AG04449 (cell line): ENCODE measurements at regions of chr4 and their contacts with region 1.

Region 1: DNA sequence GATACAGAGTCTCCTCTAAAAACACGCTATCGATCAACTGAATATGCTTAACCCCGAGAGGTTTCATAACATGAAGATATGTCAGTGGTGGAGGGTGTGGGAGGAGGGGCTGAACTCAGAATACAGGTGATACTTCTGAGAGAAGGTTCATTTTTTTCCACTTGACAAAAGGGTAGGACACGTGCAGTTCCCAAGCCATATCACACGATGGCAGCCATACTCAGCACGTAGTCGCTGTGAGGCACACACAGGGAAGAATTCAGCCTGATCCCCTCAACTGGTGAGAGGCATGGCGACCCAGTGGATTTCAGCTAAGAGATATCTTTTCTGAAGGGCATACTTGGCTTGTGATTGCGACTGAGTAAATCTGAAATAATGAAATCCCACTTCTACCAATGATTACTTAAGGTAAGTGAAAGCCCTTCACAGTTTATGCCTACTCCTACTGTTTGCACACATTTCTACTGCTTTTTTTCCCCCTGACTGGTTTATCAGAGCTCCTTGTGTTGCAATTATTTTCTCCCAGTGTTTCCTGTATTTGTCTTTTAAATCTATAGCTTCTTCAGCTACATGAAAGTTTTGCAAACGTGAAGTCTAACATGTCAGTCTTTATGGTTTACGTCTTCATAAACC is 133.1 kb downstream of the CORIN start:
- DNase-seq: no peak
- H3K4me3 ChIP-seq: no peak overlapping the region
- CTCF ChIP-seq: peak; percentile 73

Region 2: GRCh38 chr4:47668810-47669408 is 35.9 kb before region 1 on chr4:
- CTCF ChIA-PET with region 1: interaction called, 12 read pairs
- POLR2A ChIA-PET with region 1: no interaction called
- DNase-seq: no peak
- H3K4me3 ChIP-seq: no peak overlapping the region
- CTCF ChIP-seq: peak; percentile 60

Region 3: DNA sequence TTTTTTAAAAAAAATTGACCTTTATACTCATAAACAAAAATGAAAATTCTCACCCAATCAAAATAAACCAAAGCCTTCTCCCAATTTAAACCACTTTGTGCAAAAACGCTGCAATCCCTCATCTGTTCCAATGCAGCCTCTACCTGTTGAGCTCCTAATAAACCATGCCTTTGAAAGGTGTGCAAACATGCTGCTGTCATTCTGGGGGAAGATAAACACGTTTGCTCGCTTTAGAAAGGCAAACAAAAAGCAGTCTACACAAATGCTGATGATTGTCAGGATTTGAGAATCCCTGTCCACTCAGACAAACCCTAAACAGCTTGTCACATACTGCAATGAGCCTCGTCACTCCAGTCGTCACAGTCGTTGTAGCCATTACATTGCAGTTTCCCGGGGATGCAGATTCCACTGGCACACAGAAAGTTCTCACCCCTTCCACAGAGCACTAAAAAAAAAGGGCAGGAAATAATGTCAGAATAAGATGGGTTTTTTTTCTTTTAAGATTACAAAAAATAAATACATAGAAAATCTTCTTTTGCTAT is 12.1 kb before region 1 on chr4:
- CTCF ChIA-PET with region 1: interaction called, 18 read pairs
- POLR2A ChIA-PET with region 1: no interaction called
- DNase-seq: no peak
- H3K4me3 ChIP-seq: no peak overlapping the region
- CTCF ChIP-seq: no peak

Region 4: DNA sequence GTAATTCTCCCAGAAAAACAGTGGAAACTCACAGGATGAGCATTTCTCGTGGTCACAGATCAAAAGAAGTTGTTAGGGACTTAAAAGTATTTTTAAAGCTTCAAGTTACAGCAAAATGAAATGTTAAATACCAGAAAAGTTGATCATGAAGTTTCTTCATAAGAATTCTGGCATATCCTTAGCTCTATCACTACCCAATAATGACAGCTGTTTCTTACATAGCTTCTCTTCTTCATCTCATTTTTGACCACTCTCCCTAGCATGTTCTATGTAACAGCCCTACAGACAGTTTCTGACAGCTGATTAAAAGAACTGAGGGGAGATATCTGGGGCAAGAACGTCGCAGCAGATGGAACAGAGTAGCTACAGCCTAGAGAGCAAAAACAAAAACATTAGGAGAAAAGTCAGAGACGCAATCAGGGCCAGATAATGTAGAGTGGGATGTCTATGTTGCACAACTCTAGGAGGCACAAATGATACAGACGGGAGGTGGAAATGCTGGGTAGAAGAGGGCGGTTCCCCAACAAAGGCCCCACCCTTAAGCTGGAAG is 24.4 kb after region 1 on chr4:
- CTCF ChIA-PET with region 1: interaction called, 13 read pairs
- POLR2A ChIA-PET with region 1: no interaction called
- DNase-seq: no peak
- H3K4me3 ChIP-seq: no peak overlapping the region
- CTCF ChIP-seq: no peak

Region 5: DNA sequence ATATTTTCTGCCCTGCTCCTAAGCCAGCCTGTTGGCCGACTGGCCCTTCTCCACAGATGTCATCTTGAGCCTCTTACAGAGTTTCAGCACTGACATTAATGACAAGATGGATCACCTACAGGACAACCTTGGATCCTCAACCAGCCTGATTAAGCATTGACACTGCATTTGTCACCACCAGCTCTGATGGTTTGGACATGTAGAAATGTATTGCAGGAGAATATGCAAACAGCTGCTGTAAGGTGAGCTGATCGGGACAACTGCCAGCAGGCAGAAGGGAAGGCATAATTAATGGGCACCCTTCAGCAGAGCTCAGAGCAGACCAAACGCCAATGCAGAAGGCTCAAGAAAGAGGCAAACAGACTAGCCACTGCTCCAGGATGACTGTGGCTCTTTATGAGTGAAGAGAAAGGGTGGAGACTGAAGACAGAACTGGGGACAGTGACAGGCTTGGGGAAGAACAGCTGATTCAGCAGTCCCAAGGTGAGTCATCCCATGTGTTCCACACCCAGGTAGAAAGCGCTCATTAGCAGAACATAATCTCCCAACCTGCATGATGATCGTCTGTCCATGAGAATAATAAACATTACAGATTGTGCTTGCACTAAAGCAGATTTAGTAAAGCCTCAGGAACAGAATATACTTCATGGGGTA is 126.3 kb after region 1 on chr4:
- CTCF ChIA-PET with region 1: interaction called, 433 read pairs
- POLR2A ChIA-PET with region 1: no interaction called
- DNase-seq: no peak
- H3K4me3 ChIP-seq: no peak overlapping the region
- CTCF ChIP-seq: no peak

Region 6: DNA sequence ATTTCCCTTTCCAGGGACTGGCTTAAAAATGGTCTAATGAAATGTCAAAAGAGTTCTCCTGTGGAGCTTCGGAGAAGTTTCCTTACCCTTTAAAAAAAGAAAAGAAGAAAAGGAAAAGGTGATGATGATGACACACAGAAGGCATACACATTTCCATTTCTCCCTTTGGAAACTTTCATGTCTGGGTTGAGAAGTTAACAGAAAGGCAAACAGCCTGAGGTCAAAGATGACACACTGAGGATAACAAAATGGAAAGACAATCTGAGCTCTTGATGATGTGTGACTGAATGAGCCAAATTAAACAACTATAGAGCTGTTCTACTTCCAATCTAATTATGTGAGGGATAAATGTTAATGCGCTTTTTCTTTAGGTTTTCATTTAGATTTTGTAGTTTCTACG is 177.4 kb after region 1 on chr4:
- CTCF ChIA-PET with region 1: interaction called, 13 read pairs
- POLR2A ChIA-PET with region 1: no interaction called
- DNase-seq: no peak
- H3K4me3 ChIP-seq: no peak overlapping the region
- CTCF ChIP-seq: no peak

Region 7: DNA sequence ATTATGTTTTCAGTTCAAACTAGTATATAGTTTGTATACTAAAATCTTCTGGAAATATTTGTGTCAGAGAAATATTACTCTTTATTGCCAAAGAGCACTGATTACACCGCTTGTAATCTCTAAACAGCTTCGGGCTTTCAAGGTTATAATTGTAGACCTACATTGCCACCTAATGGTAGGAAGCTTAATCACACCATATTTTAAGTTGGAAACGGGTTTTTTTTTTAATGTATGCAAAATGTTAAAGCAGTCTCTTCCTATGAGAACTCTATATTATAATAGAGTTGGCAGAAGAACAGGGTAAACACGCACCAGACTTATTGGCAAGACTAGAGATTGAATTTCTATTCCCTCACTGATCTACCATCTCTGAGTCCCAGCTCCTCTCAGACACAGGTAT is 229.0 kb after region 1 on chr4:
- CTCF ChIA-PET with region 1: interaction called, 71 read pairs
- POLR2A ChIA-PET with region 1: no interaction called
- DNase-seq: no peak
- H3K4me3 ChIP-seq: no peak overlapping the region
- CTCF ChIP-seq: peak; percentile 34

Region 8: GRCh38 chr4:48739560-48740019 is 1034.8 kb after region 1 on chr4:
- CTCF ChIA-PET with region 1: no interaction called
- POLR2A ChIA-PET with region 1: no interaction called
- DNase-seq: no peak
- H3K4me3 ChIP-seq: no peak overlapping the region
- CTCF ChIP-seq: no peak